ENCODE measurements at regions of chr7 and their contacts with region 1.

Region 1: DNA sequence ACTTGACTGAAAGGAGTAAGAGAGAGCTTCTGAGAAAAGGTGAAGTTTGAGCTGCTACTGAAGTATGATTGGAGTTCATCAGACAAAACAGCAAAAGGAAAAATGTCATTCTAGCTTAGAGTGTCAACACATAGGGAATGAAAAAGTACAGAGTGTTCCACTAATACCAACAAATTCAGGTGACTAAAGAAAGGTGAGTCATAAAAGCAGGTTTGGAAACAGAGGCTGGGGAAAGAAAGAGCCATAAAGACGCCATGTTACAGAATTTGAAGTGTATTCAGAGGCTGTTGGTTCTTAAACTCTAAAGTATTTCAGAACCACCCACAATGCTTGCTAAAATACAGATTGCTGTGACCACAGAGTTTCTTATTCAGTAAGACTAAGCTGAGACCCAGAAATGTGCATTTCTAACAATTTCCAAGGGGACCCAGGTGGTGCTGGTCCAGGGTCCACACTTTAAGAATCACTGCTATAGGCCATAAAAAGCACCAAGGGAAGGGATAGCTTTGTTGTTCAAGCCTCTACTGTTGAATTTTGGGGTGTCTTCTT is 143.1 kb downstream of the ELAPOR2 start:
- DNase-seq: no peak
- H3K4me3 ChIP-seq: no peak overlapping the region
- H3K27me3 ChIP-seq: no peaks in the 10 kb centered on the region; the same call in 1 of the 2 replicates
- CTCF ChIP-seq: no peak

Region 2: DNA sequence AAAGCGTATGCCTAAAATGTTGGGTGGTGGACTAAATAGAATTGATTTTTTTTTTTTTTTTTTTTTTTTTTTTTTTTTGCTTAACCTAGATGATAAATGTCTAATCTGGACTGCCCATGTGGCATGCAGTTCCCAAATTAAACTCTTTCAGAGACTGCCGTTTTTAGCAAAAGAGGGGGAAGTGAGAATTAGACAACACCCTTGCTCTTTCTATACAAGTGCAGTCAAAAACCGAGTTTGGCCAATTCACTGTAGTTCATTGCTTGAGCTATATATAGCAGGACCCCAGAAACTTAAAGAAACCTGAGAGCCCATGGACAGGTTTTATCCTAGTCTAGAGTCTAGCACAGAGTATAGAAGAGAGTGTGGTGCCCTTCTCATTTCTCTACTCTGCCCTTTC is 130.7 kb before region 1 on chr7:
- CTCF ChIA-PET with region 1: no interaction called
- POLR2A ChIA-PET with region 1: no interaction called
- DNase-seq: no peak
- H3K4me3 ChIP-seq: no peak overlapping the region
- H3K27me3 ChIP-seq: no peaks in the 10 kb centered on the region
- CTCF ChIP-seq: no peak

Region 3: GRCh38 chr7:86814661-86815379 is 101.5 kb before region 1 on chr7:
- CTCF ChIA-PET with region 1: no interaction called
- POLR2A ChIA-PET with region 1: no interaction called
- DNase-seq: no peak
- H3K4me3 ChIP-seq: no peak overlapping the region
- H3K27me3 ChIP-seq: no peaks in the 10 kb centered on the region
- CTCF ChIP-seq: peak; percentile 28; the same call in 1 of the 2 replicates

Region 4: DNA sequence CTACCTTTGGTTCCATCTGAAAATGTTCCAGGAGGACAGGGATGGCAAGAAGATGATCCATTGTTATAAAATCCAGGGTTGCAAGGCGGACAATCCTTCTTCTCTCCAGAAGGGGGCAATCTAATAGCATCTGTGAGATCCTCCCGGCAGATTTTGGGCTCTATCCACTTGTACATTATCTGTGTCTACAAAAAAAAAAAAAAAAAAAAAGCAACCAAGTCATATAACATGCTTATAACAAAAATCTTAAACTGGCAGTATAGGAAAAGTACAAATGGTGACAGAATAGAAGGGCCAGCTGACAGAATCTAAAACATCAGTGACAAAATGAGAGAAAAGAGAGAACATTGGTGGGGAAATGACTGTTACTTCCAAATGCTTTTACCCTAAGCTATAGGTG is 10.4 kb after region 1 on chr7:
- CTCF ChIA-PET with region 1: interaction called, 11 read pairs
- POLR2A ChIA-PET with region 1: no interaction called
- DNase-seq: no peak
- H3K4me3 ChIP-seq: no peak overlapping the region
- H3K27me3 ChIP-seq: no peaks in the 10 kb centered on the region; the same call in 1 of the 2 replicates
- CTCF ChIP-seq: peak; percentile 75

Region 5: DNA sequence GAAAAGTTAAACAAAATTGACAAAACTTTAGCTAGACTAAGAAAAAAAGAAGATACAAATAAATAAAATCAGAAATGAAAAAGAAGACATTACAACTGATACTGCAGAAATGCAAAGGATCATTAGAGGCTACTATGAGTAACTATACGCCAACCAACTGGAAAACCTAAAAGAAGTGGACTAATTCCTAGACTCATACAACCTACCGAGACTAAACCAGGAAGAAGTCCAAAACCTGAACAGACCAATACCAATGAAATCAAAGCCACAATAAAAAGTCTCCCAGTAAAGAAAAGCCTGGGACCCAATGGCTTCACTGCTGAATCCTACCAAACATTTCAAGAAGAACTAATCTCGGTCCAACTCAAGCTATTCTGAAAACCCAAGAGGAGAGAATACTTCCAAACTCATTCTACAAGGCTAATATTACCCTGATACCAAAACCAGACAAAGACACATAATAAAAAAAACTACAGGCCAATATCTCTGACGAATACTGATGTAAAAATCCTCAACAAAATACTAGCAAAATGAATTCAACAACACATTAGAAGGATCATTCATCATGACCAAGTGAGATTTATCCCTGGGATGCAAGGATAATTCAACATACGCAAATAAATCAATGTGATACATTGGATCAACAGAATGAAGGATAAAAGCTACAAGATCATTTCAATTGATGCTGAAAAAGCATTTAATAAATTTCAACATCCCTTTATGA is 122.8 kb after region 1 on chr7:
- CTCF ChIA-PET with region 1: no interaction called
- POLR2A ChIA-PET with region 1: no interaction called
- DNase-seq: no peak
- H3K4me3 ChIP-seq: peak overlapping the region; percentile 23
- H3K27me3 ChIP-seq: no peaks in the 10 kb centered on the region
- CTCF ChIP-seq: no peak

Region 6: GRCh38 chr7:87083865-87084519 is 167.6 kb after region 1 on chr7:
- CTCF ChIA-PET with region 1: no interaction called
- POLR2A ChIA-PET with region 1: no interaction called
- DNase-seq: no peak
- H3K4me3 ChIP-seq: no peak overlapping the region
- H3K27me3 ChIP-seq: no peaks in the 10 kb centered on the region
- CTCF ChIP-seq: no peak